ENCODE measurements at regions of chr17 and their contacts with region 1.

Region 1: DNA sequence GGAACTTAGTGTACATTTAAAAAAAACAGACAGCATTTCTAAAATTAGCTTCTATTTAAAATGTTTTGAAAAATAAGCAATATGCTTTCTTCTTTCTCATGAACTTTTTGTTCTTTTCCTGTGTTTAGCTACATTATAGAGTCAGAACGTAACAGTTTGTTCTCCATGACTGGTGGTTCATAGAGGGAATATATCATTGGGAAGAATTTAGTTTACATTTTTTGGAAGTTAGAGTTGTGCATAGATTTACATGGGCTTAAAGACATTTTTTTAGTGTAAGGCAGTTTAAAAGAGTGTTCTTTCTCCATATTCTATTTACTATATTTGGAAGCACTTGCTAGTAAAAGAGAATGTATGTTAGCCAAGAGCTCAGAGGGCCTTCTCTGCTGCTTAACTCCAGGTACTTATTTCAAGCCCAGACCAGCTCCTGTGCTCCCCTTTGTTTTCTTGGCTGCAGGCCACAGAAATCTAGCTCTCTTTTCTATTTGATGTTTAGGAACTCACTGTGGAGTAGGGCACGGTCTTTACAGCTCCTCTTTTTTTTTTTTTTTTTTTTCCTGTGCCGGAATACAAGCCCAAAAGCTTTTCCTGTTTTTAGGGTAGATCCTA is 20.2 kb downstream of the AP2B1 start:
- DNase-seq: no peak
- H3K4me3 ChIP-seq: no peak overlapping the region
- H3K27ac ChIP-seq: no peak overlapping the region
- H3K4me1 ChIP-seq: no peaks in the 10 kb centered on the region
- H3K27me3 ChIP-seq: no peaks in the 10 kb centered on the region

Region 2: DNA sequence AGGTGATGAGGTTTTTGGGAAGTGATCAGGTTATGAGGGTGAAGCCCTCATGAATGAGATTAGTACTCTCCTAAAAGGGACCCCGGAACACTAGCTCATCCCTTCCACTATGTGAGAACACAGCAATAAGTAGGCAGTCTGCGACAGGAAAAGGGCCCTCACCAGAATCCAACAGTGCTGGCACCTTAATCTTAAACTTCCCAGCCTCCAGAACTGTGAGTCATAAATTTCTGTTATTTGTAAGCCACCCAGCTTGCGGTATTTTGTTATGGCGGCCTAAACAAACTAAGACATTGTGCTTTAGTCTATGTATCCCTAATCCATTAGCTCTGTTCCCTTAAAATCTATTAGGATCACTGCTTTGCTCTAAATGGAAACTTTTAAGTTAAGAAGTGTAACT is 183.6 kb before region 1 on chr17:
- CTCF ChIA-PET with region 1: no interaction called
- POLR2A ChIA-PET with region 1: no interaction called
- DNase-seq: no peak
- H3K4me3 ChIP-seq: no peak overlapping the region
- H3K27ac ChIP-seq: no peak overlapping the region
- H3K4me1 ChIP-seq: peaks cover 0 to 7% (median 6%) of the 10 kb centered on the region in 4 experiments
- H3K27me3 ChIP-seq: no peaks in the 10 kb centered on the region

Region 3: GRCh38 chr17:35476283-35476820 is 131.0 kb before region 1 on chr17:
- CTCF ChIA-PET with region 1: no interaction called
- POLR2A ChIA-PET with region 1: no interaction called
- DNase-seq: no peak
- H3K4me3 ChIP-seq: no peak overlapping the region
- H3K27ac ChIP-seq: no peak overlapping the region
- H3K4me1 ChIP-seq: no peaks in the 10 kb centered on the region
- H3K27me3 ChIP-seq: peaks cover 3 to 46% (median 36%) of the 10 kb centered on the region in 5 experiments

Region 4: DNA sequence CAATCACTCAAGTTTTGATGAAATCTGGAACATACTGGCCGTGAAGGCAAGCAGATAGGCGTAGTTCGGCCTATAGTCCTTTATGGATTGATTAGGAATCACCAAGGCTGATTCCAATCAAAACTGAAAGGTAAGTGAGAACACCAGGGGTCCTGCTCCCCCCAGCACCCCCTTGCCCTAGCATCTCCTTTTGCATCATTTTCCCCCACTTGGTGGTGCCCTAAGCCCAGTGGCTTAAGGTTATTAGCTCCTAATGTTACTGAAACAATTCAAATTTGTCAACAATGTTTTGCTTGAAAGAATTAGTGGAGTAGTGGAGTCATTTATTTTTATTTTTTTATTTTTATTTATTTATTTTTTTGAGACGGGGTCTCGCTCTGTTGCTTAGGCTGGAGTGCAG is 51.6 kb before region 1 on chr17:
- CTCF ChIA-PET with region 1: interaction called, 14 read pairs
- POLR2A ChIA-PET with region 1: interaction called, 5 read pairs
- DNase-seq: peak; percentile 63 to 81 (median 81)
- H3K4me3 ChIP-seq: no peak overlapping the region
- H3K27ac ChIP-seq: no peak overlapping the region
- H3K4me1 ChIP-seq: peaks cover 21 to 50% (median 43%) of the 10 kb centered on the region in 4 experiments
- H3K27me3 ChIP-seq: no peaks in the 10 kb centered on the region

Region 5: DNA sequence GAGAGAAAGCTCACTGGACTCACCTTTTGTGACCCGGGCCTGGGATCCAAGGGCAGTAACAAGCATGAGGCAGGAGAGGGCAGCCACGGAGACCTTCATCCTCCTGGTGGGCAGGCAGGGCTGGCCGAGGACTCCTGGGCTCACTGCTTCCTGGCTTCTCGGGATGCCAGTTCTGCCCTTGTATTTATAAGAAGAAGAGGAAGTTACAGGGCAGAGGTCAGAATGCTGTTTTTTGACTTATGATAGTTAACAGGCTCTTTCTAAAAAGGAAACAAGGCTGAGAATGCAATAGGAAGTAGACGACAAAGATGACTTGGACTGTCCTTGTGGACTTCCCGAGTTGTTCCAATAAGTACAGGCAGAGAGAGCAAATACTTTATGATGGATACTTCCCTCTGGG is 410.5 kb after region 1 on chr17 and contains the start of gene CCL23:
- CTCF ChIA-PET with region 1: no interaction called
- POLR2A ChIA-PET with region 1: no interaction called
- DNase-seq: peak in 2 of 3 donors; percentile 45 to 60
- H3K4me3 ChIP-seq: no peak within 1 kb of the TSS
- H3K27ac ChIP-seq: no peak within 1 kb of the TSS
- H3K4me1 ChIP-seq: peaks cover 3 to 8% (median 7%) of the 10 kb centered on the region in 4 experiments
- H3K27me3 ChIP-seq: no peaks in the 10 kb centered on the region